ENCODE measurements at regions of chr12 and their contacts with region 1.

Region 1: DNA sequence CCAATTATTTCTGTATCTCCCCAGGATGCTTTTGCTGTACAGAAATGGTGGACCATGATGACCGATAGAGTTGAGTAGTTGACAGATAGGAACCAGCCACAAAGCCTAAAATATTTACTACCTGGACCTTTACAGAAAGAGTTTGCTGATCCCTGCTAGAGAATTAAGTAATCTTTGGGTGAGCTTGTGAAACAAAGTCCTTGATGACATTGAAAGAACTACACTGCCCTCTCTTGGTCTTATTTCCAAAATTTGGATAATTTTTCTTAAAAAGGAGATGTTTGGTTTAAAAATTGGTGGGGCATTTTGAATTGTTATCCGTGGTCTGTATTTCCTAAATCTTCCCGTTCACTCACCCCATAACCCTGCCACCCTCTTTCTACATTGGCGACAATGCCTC is 13.7 kb upstream of the TCTN1 start:
- DNase-seq: peak; percentile 76
- ATAC-seq: peak; percentile 35
- H3K4me3 ChIP-seq: no peak overlapping the region
- H3K4me3 Mint-ChIP-seq: peak overlapping the region; percentile 7
- H3K27ac ChIP-seq: peak overlapping the region in 1 of 2 donors; percentile 43
- H3K27ac Mint-ChIP-seq: peak overlapping the region; percentile 75
- H3K4me1 ChIP-seq: peaks cover 45 to 53% of the 10 kb centered on the region in 2 donors
- H3K4me1 Mint-ChIP-seq: peaks cover 37% of the 10 kb centered on the region
- H3K27me3 ChIP-seq: no peaks in the 10 kb centered on the region
- H3K27me3 Mint-ChIP-seq: no peaks in the 10 kb centered on the region
- CTCF ChIP-seq: peak; percentile 63

Region 2: DNA sequence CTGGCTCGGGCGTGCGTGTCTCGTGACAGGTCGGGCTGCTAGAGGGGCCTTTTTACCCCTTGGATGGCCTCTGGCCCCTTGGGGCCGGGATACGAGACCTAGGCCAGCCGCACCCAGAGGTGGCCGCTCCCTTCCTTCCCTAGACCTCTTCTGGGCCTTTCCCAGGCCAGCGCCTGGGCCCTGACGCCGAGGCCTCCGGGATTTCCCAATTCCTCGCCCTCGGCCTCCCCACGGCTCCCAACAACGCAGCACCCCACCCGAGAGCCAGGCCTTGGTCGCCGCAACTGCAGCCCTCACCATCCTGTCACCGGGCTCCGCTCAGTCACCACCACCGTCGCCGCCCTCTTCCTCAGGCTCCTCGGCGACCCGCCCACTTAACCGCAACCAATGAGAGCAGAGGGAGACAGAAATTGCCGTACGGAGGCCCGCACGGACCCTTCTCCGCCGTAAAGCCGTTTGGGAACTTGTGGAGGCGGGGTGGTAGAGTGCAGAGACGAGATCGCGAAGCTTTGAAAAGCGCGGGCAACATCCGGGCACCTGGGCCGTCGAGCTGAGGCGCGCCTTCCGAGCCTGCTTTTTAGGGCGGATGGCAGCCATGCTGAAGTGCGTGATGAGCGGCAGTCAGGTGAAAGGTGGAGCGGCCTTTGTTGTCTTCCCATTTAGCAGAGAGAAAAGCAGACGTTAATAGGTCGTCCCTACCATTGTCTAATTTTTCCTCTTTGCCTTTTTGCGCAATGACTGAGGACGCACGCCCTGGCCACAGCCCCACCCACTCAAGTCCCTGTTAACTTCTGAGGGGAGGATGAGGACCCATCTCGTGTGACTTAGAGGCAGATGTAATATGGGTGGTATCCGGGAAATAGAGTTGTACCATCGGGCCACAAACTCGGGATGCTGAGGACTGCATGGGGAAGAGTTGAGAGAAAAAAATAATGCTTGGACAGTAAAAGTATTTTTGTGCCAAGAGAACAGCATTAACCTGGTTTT is 98.2 kb before region 1 on chr12 and contains the starts of genes RAD9B and VPS29:
- CTCF ChIA-PET with region 1: interaction called, 11 read pairs
- POLR2A ChIA-PET with region 1: no interaction called
- intact Hi-C with region 1: loop called (anchors 2 kb)
- DNase-seq: peak; percentile 99
- ATAC-seq: peak; percentile 94
- H3K4me3 ChIP-seq: peak within 1 kb of the TSS; percentile 90 to 99 (median 95)
- H3K4me3 Mint-ChIP-seq: peak within 1 kb of the TSS; percentile 93
- H3K27ac ChIP-seq: peak within 1 kb of the TSS; percentile 85 to 90
- H3K27ac Mint-ChIP-seq: peak within 1 kb of the TSS; percentile 96
- H3K4me1 ChIP-seq: peaks cover 19 to 20% of the 10 kb centered on the region in 2 donors
- H3K4me1 Mint-ChIP-seq: peaks cover 29% of the 10 kb centered on the region
- H3K27me3 ChIP-seq: no peaks in the 10 kb centered on the region
- H3K27me3 Mint-ChIP-seq: no peaks in the 10 kb centered on the region
- CTCF ChIP-seq: no peak
- total RNA-seq, gene RAD9B: 1.5 and 1.7 TPM in 2 replicates
- total RNA-seq, gene VPS29: 117 and 118 TPM in 2 replicates

Region 3: GRCh38 chr12:110543252-110543959 is 56.8 kb before region 1 on chr12:
- CTCF ChIA-PET with region 1: interaction called, 274 read pairs
- POLR2A ChIA-PET with region 1: no interaction called
- intact Hi-C with region 1: no loop called
- DNase-seq: no peak
- ATAC-seq: peak; percentile 31
- H3K4me3 ChIP-seq: no peak overlapping the region
- H3K4me3 Mint-ChIP-seq: peak overlapping the region; percentile 44
- H3K27ac ChIP-seq: peak overlapping the region; percentile 17 to 55
- H3K27ac Mint-ChIP-seq: peak overlapping the region; percentile 81
- H3K4me1 ChIP-seq: peaks cover 0 to 13% of the 10 kb centered on the region in 2 donors
- H3K4me1 Mint-ChIP-seq: peaks cover 30% of the 10 kb centered on the region
- H3K27me3 ChIP-seq: no peaks in the 10 kb centered on the region
- H3K27me3 Mint-ChIP-seq: no peaks in the 10 kb centered on the region
- CTCF ChIP-seq: no peak

Region 4: GRCh38 chr12:110583137-110584059 is 16.9 kb before region 1 on chr12 and contains the start of gene PPTC7:
- CTCF ChIA-PET with region 1: interaction called, 81 read pairs
- POLR2A ChIA-PET with region 1: interaction called, 3 read pairs
- intact Hi-C with region 1: loop called (anchors 1 kb)
- DNase-seq: peak; percentile 98
- ATAC-seq: peak; percentile 95
- H3K4me3 ChIP-seq: peak within 1 kb of the TSS; percentile 74 to 93 (median 87)
- H3K4me3 Mint-ChIP-seq: peak within 1 kb of the TSS; percentile 94
- H3K27ac ChIP-seq: peak within 1 kb of the TSS; percentile 88 to 96
- H3K27ac Mint-ChIP-seq: peak within 1 kb of the TSS; percentile 92
- H3K4me1 ChIP-seq: peaks cover 55 to 64% of the 10 kb centered on the region in 2 donors
- H3K4me1 Mint-ChIP-seq: peaks cover 69% of the 10 kb centered on the region
- H3K27me3 ChIP-seq: no peaks in the 10 kb centered on the region
- H3K27me3 Mint-ChIP-seq: no peaks in the 10 kb centered on the region
- CTCF ChIP-seq: no peak
- total RNA-seq, gene PPTC7: 44.9 and 45.6 TPM in 2 replicates

Region 5: GRCh38 chr12:110661337-110661972 is 61.2 kb after region 1 on chr12:
- CTCF ChIA-PET with region 1: interaction called, 14 read pairs
- POLR2A ChIA-PET with region 1: no interaction called
- intact Hi-C with region 1: no loop called
- DNase-seq: peak; percentile 93
- ATAC-seq: peak; percentile 85
- H3K4me3 ChIP-seq: peak overlapping the region in 4 of 5 experiments; percentile 5 to 44 (median 16)
- H3K4me3 Mint-ChIP-seq: peak overlapping the region; percentile 92
- H3K27ac ChIP-seq: peak overlapping the region; percentile 96 to 99
- H3K27ac Mint-ChIP-seq: peak overlapping the region; percentile 98
- H3K4me1 ChIP-seq: peaks cover 59 to 82% of the 10 kb centered on the region in 2 donors
- H3K4me1 Mint-ChIP-seq: peaks cover 81% of the 10 kb centered on the region
- H3K27me3 ChIP-seq: no peaks in the 10 kb centered on the region
- H3K27me3 Mint-ChIP-seq: no peaks in the 10 kb centered on the region
- CTCF ChIP-seq: no peak

Region 6: GRCh38 chr12:110888256-110888991 is 288.2 kb after region 1 on chr12:
- CTCF ChIA-PET with region 1: interaction called, 15 read pairs
- POLR2A ChIA-PET with region 1: no interaction called
- intact Hi-C with region 1: loop called (anchors 2 kb)
- DNase-seq: no peak
- ATAC-seq: no peak
- H3K4me3 ChIP-seq: peak overlapping the region in 1 of 5 experiments; percentile 62
- H3K4me3 Mint-ChIP-seq: peak overlapping the region; percentile 95
- H3K27ac ChIP-seq: no peak overlapping the region
- H3K27ac Mint-ChIP-seq: peak overlapping the region; percentile 43
- H3K4me1 ChIP-seq: peaks cover 0 to 10% of the 10 kb centered on the region in 2 donors
- H3K4me1 Mint-ChIP-seq: peaks cover 4% of the 10 kb centered on the region
- H3K27me3 ChIP-seq: no peaks in the 10 kb centered on the region
- H3K27me3 Mint-ChIP-seq: no peaks in the 10 kb centered on the region
- CTCF ChIP-seq: peak; percentile 62

Measured in B cell (primary cell).